Right ventricle myocardium superior (tissue), 1 donor: ENCODE measurements at regions of chr15 and their contacts with region 1.

Region 1: DNA sequence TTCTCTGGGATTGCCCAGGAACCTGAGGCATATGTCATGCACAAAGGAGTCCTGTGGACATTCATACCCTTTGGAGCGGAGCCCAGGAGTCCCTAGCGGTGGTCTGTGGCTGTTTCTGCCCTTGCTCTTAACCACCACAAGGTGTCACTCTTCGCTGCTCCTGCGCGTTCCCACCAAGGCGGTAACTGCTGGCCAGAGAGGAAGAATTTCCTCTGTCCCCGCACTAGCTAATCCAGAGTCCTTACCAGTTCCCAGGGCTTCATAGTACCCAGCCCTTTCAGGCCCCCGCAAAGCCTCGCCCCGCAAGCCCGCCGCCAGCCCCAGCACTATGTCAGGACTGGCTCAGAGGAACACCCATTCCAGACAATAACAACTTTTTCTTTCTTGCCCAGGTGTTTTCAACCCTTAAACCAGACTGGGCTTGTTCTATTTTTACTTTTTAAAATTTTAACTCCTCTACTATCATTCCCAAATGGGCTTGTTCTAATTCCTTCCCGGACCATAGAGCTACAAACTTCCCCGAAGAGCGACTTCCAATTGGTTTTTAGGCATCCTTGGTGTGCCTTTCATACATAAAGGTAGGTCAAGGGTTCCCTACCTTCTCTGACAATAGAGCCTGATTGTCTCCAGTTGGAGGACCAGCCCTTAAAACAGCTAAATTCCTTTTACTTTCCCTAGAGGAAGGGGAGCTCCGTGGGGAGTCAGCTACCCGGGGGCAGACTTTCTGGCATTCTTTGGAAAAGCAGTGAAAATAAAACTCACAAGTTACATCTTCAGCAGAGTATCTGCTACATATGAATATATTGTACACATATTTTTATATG is 31.8 kb upstream of the ZNF774 start:
- DNase-seq: peak; percentile 86
- ATAC-seq: peak; percentile 86

Region 2: GRCh38 chr15:90482124-90483011 is 162.1 kb after region 1 on chr15:
- intact Hi-C with region 1: loop called (anchors 5 kb)
- DNase-seq: no peak
- ATAC-seq: peak; percentile 75

Region 3: GRCh38 chr15:90618330-90619125 is 298.3 kb after region 1 on chr15:
- intact Hi-C with region 1: loop called (anchors 10 kb)
- DNase-seq: no peak
- ATAC-seq: peak; percentile 26